K562 (cell line): ENCODE measurements at regions of chr15 and their contacts with region 1.

Region 1: DNA sequence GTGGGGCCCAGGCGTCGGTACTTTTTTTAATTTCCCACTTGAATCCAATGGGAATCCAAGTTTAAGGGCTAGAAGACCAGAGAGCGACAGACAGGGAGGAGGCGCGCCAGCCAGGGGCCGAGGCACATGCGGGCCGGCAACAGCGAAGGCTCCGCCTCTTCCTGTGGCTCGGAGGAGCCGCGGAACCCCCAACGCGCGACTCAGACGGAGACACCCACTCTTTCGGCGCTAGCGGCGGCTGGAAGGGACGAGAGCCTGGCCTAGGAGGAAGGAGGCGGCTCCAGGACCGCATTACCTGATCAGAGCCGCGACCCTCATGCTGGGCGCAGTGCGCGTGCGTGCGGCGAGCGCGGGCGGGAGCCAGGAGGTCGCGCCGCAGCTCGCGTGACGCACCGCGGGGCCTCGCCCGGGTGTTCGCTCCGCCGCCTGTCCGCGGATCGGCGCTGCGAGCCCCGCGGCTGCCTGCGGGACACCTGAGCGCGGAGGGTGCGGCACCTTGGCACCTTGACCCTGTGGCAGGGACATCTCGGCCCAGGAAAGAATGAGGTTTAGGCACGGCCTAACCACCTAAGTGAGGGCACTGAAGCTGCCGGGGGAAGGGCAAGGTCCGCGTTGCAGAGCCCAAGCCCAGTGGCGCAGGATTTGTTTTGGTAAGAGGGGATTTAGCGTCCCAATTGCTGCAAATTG is at the start of gene DPH6:
- DNase-seq: peak; percentile 77 to 90 (median 86)
- ATAC-seq: peak; percentile 85
- H3K4me3 ChIP-seq: peak within 1 kb of the TSS; percentile 57
- H3K27ac ChIP-seq: peak within 1 kb of the TSS; percentile 97
- H3K4me1 ChIP-seq: peaks cover 17 to 32% of the 10 kb centered on the region in 2 experiments; a peak in 4 of 5 replicates
- H3K27me3 ChIP-seq: no peaks in the 10 kb centered on the region
- CTCF ChIP-seq: no peak
- EP300 ChIP-seq: no peak
- POLR2A ChIP-seq: peak; percentile 90
- RAD21 ChIP-seq: no peak
- polyA plus RNA-seq, gene DPH6: 58.7 to 69.1 TPM

Region 2: GRCh38 chr15:35557544-35557943 is 11.6 kb after region 1 on chr15:
- CTCF ChIA-PET with region 1: no interaction called
- POLR2A ChIA-PET with region 1: interaction called, 24 read pairs
- in situ Hi-C with region 1: no loop called
- intact Hi-C with region 1: no loop called
- DNase-seq: peak; percentile 71 to 87 (median 77)
- ATAC-seq: peak; percentile 87
- H3K4me3 ChIP-seq: no peak overlapping the region
- H3K27ac ChIP-seq: peak overlapping the region; percentile 89
- H3K4me1 ChIP-seq: peaks cover 3 to 36% of the 10 kb centered on the region in 2 experiments; a peak in 4 of 5 replicates
- H3K27me3 ChIP-seq: no peaks in the 10 kb centered on the region
- CTCF ChIP-seq: no peak
- EP300 ChIP-seq: peak; percentile 98
- POLR2A ChIP-seq: no peak
- RAD21 ChIP-seq: no peak; a peak in 1 of 4 replicates

Region 3: GRCh38 chr15:35663956-35664355 is 118.0 kb after region 1 on chr15:
- CTCF ChIA-PET with region 1: no interaction called
- POLR2A ChIA-PET with region 1: no interaction called
- in situ Hi-C with region 1: no loop called
- intact Hi-C with region 1: no loop called
- DNase-seq: no peak
- ATAC-seq: no peak
- H3K4me3 ChIP-seq: no peak overlapping the region
- H3K27ac ChIP-seq: no peak overlapping the region
- H3K4me1 ChIP-seq: peaks cover 0 to 8% of the 10 kb centered on the region in 2 experiments; a peak in 3 of 5 replicates
- H3K27me3 ChIP-seq: no peaks in the 10 kb centered on the region
- CTCF ChIP-seq: no peak
- EP300 ChIP-seq: no peak
- POLR2A ChIP-seq: no peak
- RAD21 ChIP-seq: no peak

Region 4: GRCh38 chr15:35674873-35675781 is 129.2 kb after region 1 on chr15:
- CTCF ChIA-PET with region 1: no interaction called
- POLR2A ChIA-PET with region 1: interaction called, 5 read pairs
- in situ Hi-C with region 1: no loop called
- intact Hi-C with region 1: loop called (anchors 5 kb)
- DNase-seq: peak in 2 of 4 experiments; percentile 24 to 63
- ATAC-seq: peak; percentile 59
- H3K4me3 ChIP-seq: no peak overlapping the region
- H3K27ac ChIP-seq: peak overlapping the region; percentile 75; the same call in 2 of the 3 replicates
- H3K4me1 ChIP-seq: peaks cover 0 to 29% of the 10 kb centered on the region in 2 experiments; a peak in 3 of 5 replicates
- H3K27me3 ChIP-seq: no peaks in the 10 kb centered on the region
- CTCF ChIP-seq: no peak
- EP300 ChIP-seq: no peak
- POLR2A ChIP-seq: no peak
- RAD21 ChIP-seq: no peak

Region 5: DNA sequence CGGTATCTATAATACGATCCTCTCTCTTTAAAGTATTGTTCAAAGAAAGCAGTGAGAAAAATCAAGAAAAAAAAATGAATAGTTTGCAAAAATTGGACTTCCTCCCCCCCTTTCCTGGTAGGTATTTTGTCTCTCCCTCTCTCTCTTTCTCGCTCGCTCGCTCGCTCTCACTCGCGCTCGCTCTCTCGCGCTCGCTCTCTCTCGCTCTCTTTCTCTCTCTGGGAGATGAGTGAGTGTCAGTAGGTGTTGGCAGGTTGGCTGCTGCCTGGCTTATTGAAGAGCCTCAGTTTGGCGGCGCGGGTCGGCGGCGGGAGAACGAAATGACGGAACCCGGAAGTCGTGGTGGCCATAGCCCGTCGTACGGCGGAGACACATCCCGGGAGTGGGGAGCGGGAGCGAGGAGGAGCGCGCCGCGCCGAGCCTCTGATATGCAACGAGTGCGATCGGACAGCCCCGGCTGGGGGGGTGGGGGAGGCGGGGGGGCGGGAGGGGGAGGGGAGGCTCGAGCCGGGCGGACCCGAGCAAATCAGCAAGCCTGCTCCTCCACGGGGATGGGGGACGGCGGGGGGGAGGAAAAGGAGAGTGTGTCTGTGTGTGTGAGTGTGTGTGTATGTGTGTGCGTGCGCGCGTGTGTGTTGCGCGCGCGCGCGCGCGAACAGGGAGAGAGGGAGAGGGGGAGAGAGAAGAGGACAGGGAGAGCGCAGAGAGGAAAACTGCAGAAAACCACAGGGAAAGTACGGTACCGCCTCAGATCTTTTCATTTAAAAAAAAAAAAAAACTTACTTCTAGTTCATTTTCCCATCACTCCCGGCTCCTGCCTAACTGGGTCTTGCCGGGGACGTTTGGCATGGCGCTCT is 1554.4 kb after region 1 on chr15 and contains the start of gene MEIS2:
- CTCF ChIA-PET with region 1: no interaction called
- POLR2A ChIA-PET with region 1: no interaction called
- in situ Hi-C with region 1: loop called (anchors 25 kb)
- intact Hi-C with region 1: no loop called
- DNase-seq: peak; percentile 91 to 96 (median 94)
- ATAC-seq: peak; percentile 69
- H3K4me3 ChIP-seq: peak within 1 kb of the TSS; percentile 87
- H3K27ac ChIP-seq: peak within 1 kb of the TSS; percentile 99
- H3K4me1 ChIP-seq: peaks cover 13 to 46% of the 10 kb centered on the region in 2 experiments; a peak in 4 of 5 replicates
- H3K27me3 ChIP-seq: no peaks in the 10 kb centered on the region
- CTCF ChIP-seq: 0 out of 6 replicates have a peak, but pooled peaks of 1 of the 3 experiments have one; percentile 1
- EP300 ChIP-seq: peak; percentile 31; the same call in 1 of the 2 replicates
- POLR2A ChIP-seq: peak; percentile 90
- RAD21 ChIP-seq: no peak
- polyA plus RNA-seq, gene MEIS2: 7.5 to 8.4 TPM